Activated B cell treated with CpG ODN at 0.5 μM for 24 hours (primary cell): ENCODE measurements at regions of chr7 and their contacts with region 1.

Region 1: DNA sequence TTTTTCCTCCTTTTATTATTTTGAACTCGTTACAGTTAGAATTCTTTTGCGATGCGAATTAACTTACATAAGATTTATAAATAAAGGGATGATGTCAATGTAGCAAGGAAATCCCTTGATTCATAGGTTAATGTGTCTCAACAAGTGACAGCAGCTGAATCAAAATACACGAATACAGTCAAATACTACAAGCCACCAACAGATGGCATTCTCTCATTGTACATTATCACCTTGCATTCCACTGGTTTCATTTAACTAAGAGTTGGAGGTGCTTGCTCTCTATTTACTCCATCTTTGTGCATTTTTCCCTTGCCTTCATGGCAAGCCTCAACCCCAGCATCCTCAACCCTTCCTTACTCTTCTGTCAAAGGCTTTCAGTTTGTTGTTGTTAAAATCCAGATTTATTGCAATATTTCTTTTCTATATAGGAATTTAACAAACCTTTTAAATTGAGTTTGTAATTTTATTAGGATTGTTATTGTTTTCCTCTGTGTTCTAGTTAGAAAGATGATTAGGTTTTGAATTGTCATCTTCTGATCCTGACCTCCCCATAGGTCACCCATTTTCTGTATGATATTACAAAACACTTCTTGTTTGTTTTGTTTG is 78.3 kb downstream of the SLC25A40 start:
- DNase-seq: no peak
- ATAC-seq: peak; percentile 40
- H3K4me3 Mint-ChIP-seq: no peak overlapping the region
- H3K27ac Mint-ChIP-seq: no peak overlapping the region
- H3K4me1 Mint-ChIP-seq: no peaks in the 10 kb centered on the region
- H3K27me3 Mint-ChIP-seq: peaks cover under 1% of the 10 kb centered on the region
- CTCF ChIP-seq: no peak

Region 2: DNA sequence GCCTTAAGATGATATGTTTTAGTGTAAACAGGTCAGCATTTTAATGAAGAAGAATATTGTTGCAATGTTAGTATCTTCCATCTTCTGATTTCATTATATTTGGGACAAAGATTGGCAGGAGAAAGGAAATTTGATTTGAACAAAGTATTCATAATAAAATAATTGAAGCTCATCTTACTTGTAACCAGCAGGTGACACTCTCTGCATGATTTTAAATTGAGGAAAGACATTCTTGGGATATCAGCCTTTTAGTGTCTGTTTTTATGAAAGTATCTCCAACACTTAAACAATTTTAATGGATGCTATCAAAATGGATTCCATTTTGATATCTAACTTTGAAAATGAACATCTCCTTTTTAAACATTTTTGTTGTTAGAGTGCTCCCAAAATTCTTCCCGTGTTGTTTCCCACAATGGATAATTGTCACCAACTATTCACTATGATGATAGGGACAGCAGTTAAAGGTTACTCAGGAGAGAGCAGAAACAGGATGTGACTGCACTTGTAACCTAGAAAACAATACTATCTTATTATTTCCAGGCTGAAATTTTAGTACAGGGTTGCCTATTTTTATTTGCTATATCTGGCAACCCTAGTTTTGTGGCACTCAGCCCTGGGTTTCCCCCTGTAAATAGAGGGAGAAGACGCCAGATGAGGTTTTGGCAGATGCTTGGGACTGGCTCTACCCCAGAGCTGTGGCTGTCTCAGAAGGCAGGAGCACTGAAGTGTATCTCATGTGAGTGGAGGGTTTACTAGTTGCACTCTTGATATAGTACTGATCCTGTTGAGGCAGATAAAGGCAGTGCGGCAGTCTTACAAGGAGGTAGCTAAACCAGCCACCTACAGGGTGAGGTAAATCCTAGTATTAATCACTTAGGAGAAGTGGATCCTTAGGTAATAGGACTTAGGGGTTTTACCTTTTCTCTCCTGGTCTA is 291.4 kb before region 1 on chr7:
- CTCF ChIA-PET with region 1: no interaction called
- POLR2A ChIA-PET with region 1: no interaction called
- intact Hi-C with region 1: loop called (anchors 5 kb)
- DNase-seq: no peak
- ATAC-seq: no peak
- H3K4me3 Mint-ChIP-seq: no peak overlapping the region
- H3K27ac Mint-ChIP-seq: peak overlapping the region; percentile 30
- H3K4me1 Mint-ChIP-seq: peaks cover 29% of the 10 kb centered on the region
- H3K27me3 Mint-ChIP-seq: no peaks in the 10 kb centered on the region
- CTCF ChIP-seq: no peak

Region 3: GRCh38 chr7:88111136-88111743 is 313.3 kb after region 1 on chr7:
- CTCF ChIA-PET with region 1: interaction called, 3 read pairs
- POLR2A ChIA-PET with region 1: no interaction called
- intact Hi-C with region 1: loop called (anchors 1 kb)
- DNase-seq: no peak
- ATAC-seq: no peak
- H3K4me3 Mint-ChIP-seq: no peak overlapping the region
- H3K27ac Mint-ChIP-seq: no peak overlapping the region
- H3K4me1 Mint-ChIP-seq: no peaks in the 10 kb centered on the region
- H3K27me3 Mint-ChIP-seq: no peaks in the 10 kb centered on the region
- CTCF ChIP-seq: no peak

Region 4: DNA sequence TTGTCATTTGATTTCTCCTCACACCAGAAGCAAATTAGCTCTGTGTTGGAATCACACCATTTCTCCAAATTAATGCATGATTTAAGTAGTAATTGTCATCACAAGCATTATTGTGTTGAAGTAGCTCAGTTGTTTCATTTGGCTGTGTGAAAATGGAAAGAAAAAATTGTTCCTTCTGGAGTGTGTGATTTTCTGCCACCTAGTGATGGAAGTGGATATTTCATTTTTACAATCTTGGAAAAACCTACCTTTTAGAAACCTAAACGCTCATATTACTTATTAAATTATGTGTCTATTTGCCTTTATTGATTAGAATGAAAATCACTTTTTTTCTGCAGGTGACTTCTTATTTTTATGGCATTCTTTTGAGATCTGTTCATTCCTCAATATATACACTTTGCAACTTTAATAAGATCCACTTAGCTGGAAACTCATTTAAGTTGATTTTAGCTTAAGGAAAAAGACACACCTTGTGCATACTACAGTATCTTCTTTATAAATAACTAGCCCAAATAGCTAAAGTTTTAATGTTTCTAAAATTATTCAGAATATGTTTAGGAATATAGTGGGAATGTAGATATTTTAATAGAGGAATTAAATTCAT is 371.9 kb after region 1 on chr7:
- CTCF ChIA-PET with region 1: no interaction called
- POLR2A ChIA-PET with region 1: no interaction called
- intact Hi-C with region 1: loop called (anchors 1 kb)
- DNase-seq: no peak
- ATAC-seq: no peak
- H3K4me3 Mint-ChIP-seq: no peak overlapping the region
- H3K27ac Mint-ChIP-seq: no peak overlapping the region
- H3K4me1 Mint-ChIP-seq: no peaks in the 10 kb centered on the region
- H3K27me3 Mint-ChIP-seq: no peaks in the 10 kb centered on the region
- CTCF ChIP-seq: peak; percentile 17